Tibial artery (tissue), 4 donors: ENCODE measurements at regions of chr4 and their contacts with region 1.

Region 1: GRCh38 chr4:140180577-140180976 is 26.6 kb upstream of the MAML3 start:
- DNase-seq: no peak
- H3K4me3 ChIP-seq: no peak overlapping the region
- H3K27ac ChIP-seq: no peak overlapping the region
- H3K4me1 ChIP-seq: no peaks in the 10 kb centered on the region
- H3K27me3 ChIP-seq: no peaks in the 10 kb centered on the region
- CTCF ChIP-seq: no peak

Region 2: GRCh38 chr4:140807491-140808252 is 627.1 kb after region 1 on chr4:
- intact Hi-C with region 1: loop called (anchors 5 kb)
- DNase-seq: no peak
- H3K4me3 ChIP-seq: no peak overlapping the region
- H3K27ac ChIP-seq: no peak overlapping the region
- H3K4me1 ChIP-seq: no peaks in the 10 kb centered on the region
- H3K27me3 ChIP-seq: peaks cover 0 to 7% of the 10 kb centered on the region in 2 donors
- CTCF ChIP-seq: no peak